ENCODE measurements at regions of chr13 and their contacts with region 1.

Region 1: DNA sequence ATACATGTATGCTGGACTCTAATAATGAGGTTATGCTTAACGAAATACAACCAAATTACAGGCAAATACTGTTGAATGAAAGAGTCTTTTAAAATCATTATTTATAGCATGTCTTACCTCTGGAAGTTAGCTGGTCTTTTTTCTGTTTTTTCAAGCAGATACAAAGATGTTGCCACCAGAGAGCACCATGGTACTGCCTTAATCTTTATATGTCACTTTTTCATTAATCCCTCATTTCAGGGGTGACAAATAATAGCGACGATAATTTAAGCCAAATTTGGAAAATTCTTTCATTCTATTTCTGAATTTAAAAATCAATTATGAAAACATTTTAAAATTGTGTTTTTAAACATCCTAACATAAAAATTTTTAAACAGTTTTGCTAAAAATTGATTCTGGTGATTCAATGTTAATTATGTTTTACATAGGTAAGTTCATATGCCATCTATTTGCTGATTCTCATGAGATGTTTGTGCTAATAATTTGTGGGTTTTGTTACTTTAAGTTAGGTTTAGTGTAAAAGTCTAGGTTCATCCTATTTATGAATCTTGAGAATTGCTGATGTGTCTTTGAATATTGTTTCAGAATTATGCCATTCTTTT is 379.3 kb upstream of the SGCG start:
- DNase-seq: no peak
- ATAC-seq: no peak
- H3K4me3 ChIP-seq: no peak overlapping the region
- H3K27ac ChIP-seq: no peak overlapping the region
- H3K4me1 ChIP-seq: no peaks in the 10 kb centered on the region
- H3K27me3 ChIP-seq: peaks cover 0 to 6% (median 0%) of the 10 kb centered on the region in 9 donors
- CTCF ChIP-seq: peak in 11 of 12 donors; percentile 11 to 50 (median 24)
- POLR2A ChIP-seq: no peak

Region 2: DNA sequence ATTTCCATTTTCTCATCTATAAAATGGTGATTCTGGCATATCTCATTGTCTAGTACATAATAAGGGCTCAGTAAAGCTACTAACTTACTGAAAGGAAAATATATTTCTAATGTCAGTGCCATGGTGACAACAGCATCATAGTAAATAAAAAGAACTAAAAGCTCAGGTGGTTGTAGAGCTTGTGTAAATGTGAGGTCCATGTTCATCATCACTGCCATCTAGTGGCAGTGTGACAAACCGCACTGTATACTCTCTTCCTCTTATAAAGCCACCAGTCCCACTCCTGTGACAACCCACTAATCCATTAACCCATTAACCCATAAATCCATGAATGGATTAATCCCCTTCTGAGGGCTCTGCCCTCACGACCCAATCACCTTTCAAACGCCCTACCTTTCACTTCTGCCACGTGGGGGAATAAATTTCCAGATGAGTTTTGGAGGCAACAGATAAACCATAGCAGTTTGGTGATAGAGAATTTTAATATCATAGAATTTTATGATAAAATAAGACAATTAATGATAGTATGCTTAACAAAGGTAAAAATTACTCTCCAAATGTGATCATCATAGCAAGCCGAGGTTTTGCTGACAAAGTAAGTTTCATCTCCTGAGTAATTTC is 218.8 kb after region 1 on chr13:
- intact Hi-C with region 1: loop called (anchors 2 to 10 kb)
- DNase-seq: peak in 3 of 5 donors; percentile 12 to 39 (median 22)
- ATAC-seq: peak; percentile 47 to 76 (median 66)
- H3K4me3 ChIP-seq: no peak overlapping the region
- H3K27ac ChIP-seq: no peak overlapping the region
- H3K4me1 ChIP-seq: no peaks in the 10 kb centered on the region
- H3K27me3 ChIP-seq: peaks cover 0 to 9% (median 0%) of the 10 kb centered on the region in 9 donors
- CTCF ChIP-seq: peak; percentile 63 to 88 (median 76)
- POLR2A ChIP-seq: no peak

Region 3: DNA sequence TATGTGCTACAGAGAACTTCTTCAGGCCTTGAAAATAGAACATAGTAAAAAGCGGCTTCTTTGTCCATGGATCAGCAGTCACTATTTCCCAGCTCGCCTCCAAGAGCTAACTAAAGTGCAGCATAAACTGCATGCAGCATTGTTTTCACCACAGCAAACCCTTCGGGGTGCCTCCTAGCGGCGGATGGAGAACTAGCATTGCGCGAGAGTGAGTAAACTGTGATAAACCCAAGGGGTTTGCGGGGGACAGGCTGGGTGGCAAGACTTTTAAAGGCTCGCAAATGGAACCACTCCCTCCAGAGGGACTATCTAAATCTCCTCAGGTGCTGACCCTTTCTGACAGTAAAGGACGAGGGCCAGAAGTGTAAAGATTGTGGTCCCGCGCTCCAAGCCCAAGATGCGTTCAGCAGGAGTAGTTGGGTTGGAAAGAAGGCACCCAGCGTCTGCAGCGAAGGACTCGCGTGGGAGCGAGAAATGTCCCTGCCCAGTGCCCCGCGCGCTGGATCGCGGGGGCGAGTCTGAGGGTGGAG is 357.8 kb after region 1 on chr13:
- intact Hi-C with region 1: loop called in 1 of 10 experiments (anchors 10 kb)
- DNase-seq: peak in 1 of 5 donors; percentile 38
- ATAC-seq: peak in 3 of 4 donors; percentile 49 to 87 (median 68)
- H3K4me3 ChIP-seq: peak overlapping the region in 11 of 12 donors; percentile 25 to 59 (median 49)
- H3K27ac ChIP-seq: no peak overlapping the region
- H3K4me1 ChIP-seq: peaks cover 0 to 13% (median 0%) of the 10 kb centered on the region in 12 donors
- H3K27me3 ChIP-seq: peaks cover 0 to 22% (median 0%) of the 10 kb centered on the region in 9 donors
- CTCF ChIP-seq: peak; percentile 33 to 67 (median 53)
- POLR2A ChIP-seq: no peak

Region 4: DNA sequence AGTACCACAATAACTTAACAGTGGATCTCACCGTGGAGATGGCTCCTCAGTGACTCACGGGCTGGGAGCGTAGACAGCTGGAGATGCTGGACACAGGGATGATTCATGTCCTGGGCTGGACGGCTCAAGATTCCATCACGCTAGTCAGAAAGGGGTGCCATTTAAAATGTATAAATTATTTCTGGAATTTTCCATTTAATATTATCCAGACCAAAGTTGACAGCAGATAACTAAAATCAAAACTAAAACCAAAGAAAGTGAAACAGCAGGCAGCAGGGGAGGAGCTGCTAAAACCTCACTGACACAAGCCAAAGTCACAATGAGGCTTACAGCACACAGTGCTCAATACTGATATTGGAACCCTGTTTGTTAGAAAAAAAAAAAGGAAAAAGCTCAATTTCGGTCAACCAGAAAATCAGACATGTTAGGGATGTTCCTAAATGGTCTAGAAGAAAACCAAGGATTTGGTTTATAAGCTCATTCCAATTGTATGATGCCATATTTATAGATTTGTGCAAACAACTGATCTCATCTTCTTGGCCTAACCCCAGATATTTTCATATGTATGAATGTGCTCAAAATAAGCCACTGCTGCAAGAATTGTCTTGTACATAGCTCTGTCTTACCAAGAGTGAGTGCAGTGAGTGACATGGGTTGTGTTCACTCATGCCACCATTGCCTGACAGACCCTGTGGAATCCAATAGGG is 520.2 kb after region 1 on chr13:
- intact Hi-C with region 1: loop called in 1 of 10 experiments (anchors 10 kb)
- DNase-seq: peak; percentile 32 to 79 (median 64)
- ATAC-seq: peak; percentile 39 to 95 (median 84)
- H3K4me3 ChIP-seq: peak overlapping the region in 8 of 12 donors; percentile 11 to 43 (median 22)
- H3K27ac ChIP-seq: peak overlapping the region in 6 of 12 donors; percentile 2 to 63 (median 38)
- H3K4me1 ChIP-seq: peaks cover 0 to 32% (median 9%) of the 10 kb centered on the region in 12 donors
- H3K27me3 ChIP-seq: no peaks in the 10 kb centered on the region
- CTCF ChIP-seq: no peak
- POLR2A ChIP-seq: no peak